HepG2 (cell line): ENCODE measurements at regions of chr19 and their contacts with region 1.

Region 1: GRCh38 chr19:44113138-44113783 is at the start of gene ZNF225:
- DNase-seq: peak; percentile 97
- ATAC-seq: peak; percentile 99
- H3K4me3 ChIP-seq: peak within 1 kb of the TSS; percentile 82 to 92 (median 82)
- H3K27ac ChIP-seq: peak within 1 kb of the TSS; percentile 51
- H3K4me1 ChIP-seq: peaks cover 14% of the 10 kb centered on the region
- H3K27me3 ChIP-seq: no peaks in the 10 kb centered on the region; a peak in 1 of 5 replicates
- CTCF ChIP-seq: no peak
- EP300 ChIP-seq: peak in 1 of 2 experiments; percentile 27; a peak in 1 of 4 replicates
- POLR2A ChIP-seq: peak; percentile 56 to 71
- RAD21 ChIP-seq: 0 out of 2 replicates have a peak, but pooled peaks have one; percentile 6
- total RNA-seq, gene ZNF225: 3.3 and 4.6 TPM in 2 replicates

Region 2: DNA sequence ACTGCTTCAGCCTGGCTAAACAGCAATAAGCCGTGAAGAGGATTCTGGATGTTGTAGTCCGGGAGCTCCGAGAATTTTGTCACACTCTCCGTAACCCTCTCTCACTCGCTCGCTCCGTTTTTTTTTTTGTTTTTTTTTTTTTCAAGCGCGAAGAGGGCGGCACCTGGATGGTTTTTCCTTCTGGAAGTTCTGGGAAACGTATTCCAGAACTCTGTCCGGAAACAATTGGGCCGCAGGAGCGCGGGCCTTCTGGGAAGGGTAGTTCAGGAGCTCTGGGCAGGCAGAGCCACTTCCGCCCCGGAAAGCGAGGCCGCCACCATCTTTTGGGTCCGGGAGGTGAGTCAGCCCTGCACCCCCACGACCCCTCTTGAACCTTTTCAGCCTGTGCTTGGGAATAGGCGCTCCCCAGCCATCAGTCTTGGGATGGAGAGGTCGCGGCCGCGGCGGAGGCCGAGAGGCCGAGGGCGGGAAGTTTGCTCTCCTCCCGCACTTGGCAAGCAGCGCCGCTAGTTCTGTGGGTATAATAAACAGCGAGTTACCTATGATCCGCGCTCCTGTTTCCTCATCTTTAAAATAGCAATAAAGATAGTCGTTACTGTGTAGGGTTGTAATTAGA is 99.1 kb after region 1 on chr19 and contains the start of gene ZNF227:
- CTCF ChIA-PET with region 1: no interaction called
- POLR2A ChIA-PET with region 1: interaction called, 5 read pairs
- in situ Hi-C with region 1: no loop called
- intact Hi-C with region 1: loop called (anchors 1 kb)
- DNase-seq: peak; percentile 93
- ATAC-seq: peak; percentile 99
- H3K4me3 ChIP-seq: peak within 1 kb of the TSS; percentile 90 to 100 (median 91)
- H3K27ac ChIP-seq: peak within 1 kb of the TSS; percentile 58
- H3K4me1 ChIP-seq: peaks cover 11% of the 10 kb centered on the region
- H3K27me3 ChIP-seq: peaks cover 0 to 3% of the 10 kb centered on the region in 2 experiments; a peak in 1 of 5 replicates
- CTCF ChIP-seq: no peak
- EP300 ChIP-seq: no peak
- POLR2A ChIP-seq: peak; percentile 51 to 76
- RAD21 ChIP-seq: no peak
- total RNA-seq, gene ZNF227: 16.8 and 23.2 TPM in 2 replicates